WTC11 (cell line): ENCODE measurements at regions of chr11 and their contacts with region 1.

Region 1: DNA sequence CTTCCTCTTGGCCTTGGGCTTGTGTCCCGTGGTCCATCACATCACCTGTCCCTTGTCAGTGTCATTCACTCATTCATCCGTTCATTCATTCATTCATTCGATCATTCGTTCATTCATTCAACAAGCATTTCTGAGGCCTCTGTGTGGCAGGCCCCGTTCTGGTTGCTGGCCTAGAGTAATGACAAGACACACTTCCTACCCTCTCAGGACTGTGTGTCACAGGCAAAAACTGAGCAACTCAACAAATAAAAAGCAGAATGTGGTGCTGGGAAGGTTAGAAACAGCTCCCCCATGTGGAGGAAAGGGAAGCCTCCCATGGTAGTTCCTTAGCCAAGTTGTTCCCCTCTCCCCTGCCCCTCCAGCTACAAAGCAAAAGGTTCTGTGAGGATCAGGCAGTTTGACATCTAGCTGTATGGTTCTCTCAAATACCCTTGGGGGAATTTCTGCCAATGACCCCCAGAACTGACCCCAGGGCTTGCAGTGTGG is 1.5 kb upstream of the OMP start:
- DNase-seq: peak; percentile 47
- ATAC-seq: peak; percentile 67
- H3K4me3 Mint-ChIP-seq: no peak overlapping the region
- H3K27ac Mint-ChIP-seq: no peak overlapping the region
- H3K4me1 Mint-ChIP-seq: no peaks in the 10 kb centered on the region
- H3K27me3 Mint-ChIP-seq: no peaks in the 10 kb centered on the region
- CTCF ChIP-seq: peak; percentile 45; the same call in 1 of the 2 replicates

Region 2: GRCh38 chr11:76984747-76985146 is 116.3 kb before region 1 on chr11:
- CTCF ChIA-PET with region 1: no interaction called
- POLR2A ChIA-PET with region 1: no interaction called
- DNase-seq: no peak
- ATAC-seq: no peak
- H3K4me3 Mint-ChIP-seq: no peak overlapping the region
- H3K27ac Mint-ChIP-seq: no peak overlapping the region
- H3K4me1 Mint-ChIP-seq: peaks cover 5% of the 10 kb centered on the region
- H3K27me3 Mint-ChIP-seq: no peaks in the 10 kb centered on the region
- CTCF ChIP-seq: no peak

Region 3: GRCh38 chr11:77047007-77047927 is 53.8 kb before region 1 on chr11:
- CTCF ChIA-PET with region 1: interaction called, 21 read pairs
- POLR2A ChIA-PET with region 1: no interaction called
- DNase-seq: peak; percentile 61
- ATAC-seq: peak; percentile 80
- H3K4me3 Mint-ChIP-seq: peak overlapping the region; percentile 51
- H3K27ac Mint-ChIP-seq: peak overlapping the region; percentile 52
- H3K4me1 Mint-ChIP-seq: peaks cover 14% of the 10 kb centered on the region
- H3K27me3 Mint-ChIP-seq: peaks cover 16% of the 10 kb centered on the region
- CTCF ChIP-seq: no peak

Region 4: DNA sequence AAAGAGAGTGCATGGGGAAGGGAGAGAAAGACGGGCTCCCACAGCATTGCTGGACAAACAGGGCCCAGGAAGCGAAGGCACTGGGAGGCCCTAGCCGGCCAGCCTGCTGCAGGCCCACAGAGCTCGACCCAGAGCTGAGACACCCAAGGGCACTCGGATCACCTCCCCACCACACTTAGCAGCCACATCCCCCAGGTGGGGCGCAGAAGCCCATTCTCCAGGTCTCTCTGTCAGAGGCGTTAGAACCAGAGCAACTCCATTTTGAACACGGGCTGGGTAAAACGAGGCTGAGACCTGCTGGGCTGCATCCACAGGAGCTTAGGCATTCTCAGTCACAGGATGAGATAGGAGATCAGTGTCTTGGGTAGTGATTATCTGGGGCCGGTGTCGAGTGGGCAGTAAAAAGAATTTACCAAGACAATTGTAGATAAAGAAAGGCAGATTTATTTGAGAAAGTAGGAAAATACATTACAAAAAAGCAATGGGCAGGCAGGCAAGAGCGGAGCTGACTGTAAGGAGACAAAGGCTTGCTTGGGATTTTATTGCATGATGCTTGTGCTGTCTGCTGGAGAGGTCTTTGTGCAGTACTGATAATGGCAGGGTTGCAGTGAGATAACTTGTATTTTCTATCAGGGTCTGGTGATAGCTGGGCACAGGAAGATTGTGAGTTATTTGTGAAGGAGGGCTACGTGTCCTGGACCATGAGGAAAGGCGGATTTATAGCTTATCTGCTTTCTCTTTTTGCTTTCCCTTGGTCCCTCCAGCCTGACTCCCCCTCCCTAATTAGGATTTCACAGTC is 47.7 kb before region 1 on chr11:
- CTCF ChIA-PET with region 1: interaction called, 21 read pairs
- POLR2A ChIA-PET with region 1: no interaction called
- DNase-seq: no peak
- ATAC-seq: no peak
- H3K4me3 Mint-ChIP-seq: no peak overlapping the region
- H3K27ac Mint-ChIP-seq: no peak overlapping the region
- H3K4me1 Mint-ChIP-seq: 0 out of 2 replicates have a peak, but pooled peaks cover 8% of the 10 kb centered on the region
- H3K27me3 Mint-ChIP-seq: peaks cover 3% of the 10 kb centered on the region
- CTCF ChIP-seq: no peak

Region 5: DNA sequence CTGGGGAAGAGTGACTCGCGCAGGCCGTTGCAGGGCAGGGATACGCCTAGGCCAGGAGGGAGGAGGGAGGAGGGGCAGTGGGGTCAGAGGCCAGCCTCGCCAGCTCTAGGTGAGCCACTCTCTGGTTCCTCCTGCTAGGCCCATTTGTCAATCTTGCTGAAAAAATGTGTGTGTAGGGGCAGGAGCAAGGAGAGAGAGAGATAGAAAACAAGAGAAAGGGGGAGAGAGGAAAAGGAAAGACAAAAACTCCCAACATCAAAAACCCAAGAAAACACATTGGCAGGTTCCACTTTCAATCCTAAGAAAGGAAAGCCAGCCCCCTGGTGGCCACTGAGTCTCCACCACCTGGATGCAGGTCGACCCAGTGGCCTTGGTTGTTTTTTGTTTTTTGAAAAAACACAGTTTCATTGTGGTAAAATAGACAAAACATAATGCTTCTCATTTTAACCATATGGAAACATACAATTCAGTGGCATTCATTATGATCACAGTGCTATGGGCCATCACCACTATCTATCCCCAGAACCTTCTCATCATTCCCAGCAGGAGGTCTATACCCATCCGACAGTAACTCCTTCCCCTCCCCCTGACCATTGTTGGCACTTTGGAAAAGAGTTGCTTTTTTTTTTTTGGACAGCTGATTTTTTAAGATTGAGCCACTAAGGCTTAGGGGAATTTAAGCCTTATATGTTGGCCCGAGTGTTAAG is 12.4 kb after region 1 on chr11:
- CTCF ChIA-PET with region 1: interaction called, 20 read pairs
- POLR2A ChIA-PET with region 1: no interaction called
- DNase-seq: peak; percentile 60
- ATAC-seq: peak; percentile 65
- H3K4me3 Mint-ChIP-seq: no peak overlapping the region
- H3K27ac Mint-ChIP-seq: peak overlapping the region; percentile 64
- H3K4me1 Mint-ChIP-seq: peaks cover 12% of the 10 kb centered on the region
- H3K27me3 Mint-ChIP-seq: no peaks in the 10 kb centered on the region
- CTCF ChIP-seq: peak; percentile 45

Region 6: DNA sequence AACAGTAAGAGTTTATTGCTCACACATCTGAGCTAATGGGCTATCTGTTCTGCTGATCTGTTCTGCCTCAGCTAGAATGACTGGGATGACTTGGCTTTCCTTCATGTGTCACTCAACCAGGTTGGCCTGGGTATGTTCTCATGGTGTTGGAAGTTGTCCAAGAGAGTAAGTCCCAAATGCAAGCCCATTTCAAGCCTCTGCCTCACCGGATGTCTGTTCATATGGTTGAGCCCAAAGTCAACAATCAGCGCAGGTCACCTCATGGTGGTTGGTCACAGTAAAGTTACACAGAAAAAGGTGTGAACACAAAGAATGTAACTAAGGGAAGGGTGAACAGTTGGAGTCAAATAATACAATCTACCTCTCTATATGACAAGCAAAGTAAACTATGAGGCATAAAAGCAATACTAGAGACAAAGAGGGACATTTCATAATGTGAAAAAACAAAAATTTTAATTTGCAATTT is 198.5 kb after region 1 on chr11:
- CTCF ChIA-PET with region 1: no interaction called
- POLR2A ChIA-PET with region 1: no interaction called
- DNase-seq: no peak
- ATAC-seq: no peak
- H3K4me3 Mint-ChIP-seq: no peak overlapping the region
- H3K27ac Mint-ChIP-seq: no peak overlapping the region
- H3K4me1 Mint-ChIP-seq: peaks cover 15% of the 10 kb centered on the region
- H3K27me3 Mint-ChIP-seq: peaks cover 2% of the 10 kb centered on the region; the same call in 1 of the 2 replicates
- CTCF ChIP-seq: no peak